Breast epithelium (tissue), 4 donors: ENCODE measurements at regions of chr12 and their contacts with region 1.

Region 1: GRCh38 chr12:6154730-6155459 is 30.4 kb upstream of the VWF start:
- DNase-seq: no peak
- H3K4me3 ChIP-seq: no peak overlapping the region
- H3K27ac ChIP-seq: peak overlapping the region in 1 of 2 donors; percentile 6
- H3K4me1 ChIP-seq: no peaks in the 10 kb centered on the region
- H3K27me3 ChIP-seq: no peaks in the 10 kb centered on the region
- CTCF ChIP-seq: no peak
- POLR2A ChIP-seq: no peak

Region 2: DNA sequence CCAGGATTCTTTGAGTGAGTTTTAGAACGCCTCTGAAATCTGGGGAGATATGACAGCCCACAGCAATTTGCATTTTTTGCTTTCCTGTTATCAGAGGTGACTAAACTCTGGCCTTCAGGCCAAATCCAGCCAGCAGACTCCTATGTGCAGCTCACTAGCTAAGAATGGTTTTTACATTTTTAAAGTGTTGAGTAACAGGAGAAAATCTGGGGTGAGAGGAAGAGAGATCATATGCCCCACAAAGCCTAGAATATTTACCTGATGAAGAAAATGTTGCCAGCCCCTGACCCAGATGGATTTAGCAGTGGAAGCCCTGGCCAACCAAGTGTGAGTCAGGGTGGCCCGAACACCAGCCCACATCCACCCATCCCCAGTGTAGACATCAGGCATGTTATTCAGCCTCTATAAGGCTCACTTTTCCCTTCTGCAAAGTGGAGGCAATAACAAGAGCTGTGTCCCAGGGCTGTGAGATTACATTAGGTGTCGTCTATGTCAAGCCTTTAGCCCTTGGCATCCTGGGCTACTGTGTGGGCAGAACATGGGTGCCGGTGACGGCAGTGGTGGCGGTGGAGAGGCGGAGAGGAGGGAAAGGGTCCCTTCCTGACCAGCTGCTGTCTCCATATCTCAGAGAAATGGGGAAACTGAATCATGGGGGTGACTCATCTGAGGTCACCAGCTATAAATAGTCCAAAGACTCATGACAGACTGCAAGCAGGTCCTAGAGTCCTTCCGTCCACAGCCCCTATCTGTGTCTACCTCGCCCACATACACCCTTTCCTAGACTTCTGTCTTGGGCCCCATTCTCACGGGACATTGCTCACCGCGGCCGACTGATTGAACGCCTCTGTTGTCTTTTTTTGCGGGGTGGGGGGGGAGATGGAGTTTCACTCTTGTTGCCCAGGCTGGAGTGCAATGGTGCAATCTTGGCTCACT is 12.7 kb after region 1 on chr12:
- intact Hi-C with region 1: loop called (anchors 1 kb)
- DNase-seq: no peak
- H3K4me3 ChIP-seq: no peak overlapping the region
- H3K27ac ChIP-seq: peak overlapping the region; percentile 69 to 85
- H3K4me1 ChIP-seq: no peaks in the 10 kb centered on the region
- H3K27me3 ChIP-seq: no peaks in the 10 kb centered on the region
- CTCF ChIP-seq: no peak
- POLR2A ChIP-seq: no peak